ENCODE measurements at regions of chr6 and their contacts with region 1.

Region 1: DNA sequence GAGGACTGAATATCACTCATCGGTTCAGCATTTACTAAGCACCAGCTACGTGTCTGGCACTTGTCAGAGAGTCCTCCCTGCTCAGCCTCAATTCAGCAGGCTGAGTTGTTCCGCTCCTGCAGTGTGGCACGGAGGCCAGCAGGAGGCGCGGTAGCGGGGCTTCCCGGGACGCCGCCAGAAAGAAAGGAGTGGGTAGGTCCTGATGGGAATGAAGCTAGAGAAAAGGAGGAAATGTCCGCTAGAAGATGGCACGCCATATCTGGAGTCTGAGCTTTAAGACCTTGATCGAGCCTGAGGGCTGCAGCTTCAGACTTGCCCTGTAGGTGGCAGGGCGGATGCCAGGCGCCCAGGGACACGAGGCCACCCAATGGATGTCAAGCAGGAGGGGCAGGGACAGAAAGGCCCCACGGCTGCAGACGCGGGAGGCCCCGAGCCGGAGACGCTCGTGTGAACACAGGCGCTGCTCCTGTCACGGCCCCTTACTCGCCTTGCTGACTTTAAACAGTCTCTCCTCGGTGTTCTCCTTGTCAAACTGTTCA is 18.7 kb downstream of the SERPINB6 start:
- DNase-seq: peak; percentile 65
- H3K4me3 ChIP-seq: peak overlapping the region; percentile 4
- CTCF ChIP-seq: peak; percentile 73

Region 2: GRCh38 chr6:2791124-2791974 is 161.3 kb before region 1 on chr6:
- CTCF ChIA-PET with region 1: interaction called, 14 read pairs
- POLR2A ChIA-PET with region 1: no interaction called
- DNase-seq: peak; percentile 61
- H3K4me3 ChIP-seq: no peak overlapping the region
- CTCF ChIP-seq: peak; percentile 68

Region 3: GRCh38 chr6:2900821-2901644 is 51.6 kb before region 1 on chr6:
- CTCF ChIA-PET with region 1: interaction called, 10 read pairs
- POLR2A ChIA-PET with region 1: no interaction called
- DNase-seq: no peak
- H3K4me3 ChIP-seq: no peak overlapping the region
- CTCF ChIP-seq: no peak

Region 4: GRCh38 chr6:2966347-2966746 is 13.7 kb after region 1 on chr6:
- CTCF ChIA-PET with region 1: interaction called, 61 read pairs
- POLR2A ChIA-PET with region 1: interaction called, 3 read pairs
- DNase-seq: no peak
- H3K4me3 ChIP-seq: no peak overlapping the region
- CTCF ChIP-seq: no peak

Region 5: GRCh38 chr6:2982464-2983117 is 30.0 kb after region 1 on chr6:
- CTCF ChIA-PET with region 1: interaction called, 210 read pairs
- POLR2A ChIA-PET with region 1: no interaction called
- DNase-seq: no peak
- H3K4me3 ChIP-seq: no peak overlapping the region
- CTCF ChIP-seq: no peak